PC-9 (cell line): ENCODE measurements at regions of chr2 and their contacts with region 1.

Region 1: DNA sequence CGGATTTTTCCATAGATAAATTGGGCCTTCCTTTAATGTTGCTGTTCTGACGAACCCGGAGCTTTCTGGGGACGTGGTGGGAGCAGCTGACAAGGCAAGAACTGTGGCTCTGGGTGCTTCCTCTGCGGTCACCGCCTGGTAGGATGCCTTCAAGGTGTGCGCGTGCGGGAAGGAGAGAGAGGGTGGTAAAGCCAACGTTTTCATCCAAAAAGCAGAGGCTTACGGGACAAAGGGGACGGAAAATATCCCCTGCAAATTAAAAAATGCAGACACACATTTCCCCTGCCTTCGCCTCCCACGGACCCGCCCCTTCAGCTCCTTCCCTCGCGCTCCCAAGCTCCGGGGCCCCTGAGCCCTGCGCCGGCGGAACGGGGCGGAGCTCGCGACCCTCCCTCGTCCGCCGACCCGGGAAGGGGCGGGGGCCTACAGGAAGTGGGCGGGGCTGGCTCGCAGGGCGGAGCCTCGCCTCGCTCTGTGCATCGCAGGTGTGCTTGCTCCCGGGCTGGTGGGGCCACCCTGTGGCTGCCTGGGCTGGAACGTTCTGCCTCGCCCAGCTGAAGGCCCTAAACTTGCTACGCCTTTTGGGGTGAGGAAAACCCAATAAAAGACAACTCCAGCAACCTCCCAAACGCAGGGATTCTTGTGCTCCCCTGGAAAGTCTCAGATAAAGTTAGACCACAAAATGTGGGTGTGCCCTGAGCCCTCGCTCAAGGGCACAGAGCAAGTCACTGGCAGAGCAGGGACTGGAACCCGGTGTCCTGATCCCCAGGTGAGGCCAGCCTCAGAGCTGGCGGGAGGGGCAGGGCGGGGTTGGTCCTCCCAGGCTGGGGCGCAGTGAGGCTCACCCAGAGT is 25.4 kb upstream of the SLC66A3 start:
- DNase-seq: peak; percentile 41 to 73
- H3K4me3 ChIP-seq: peak overlapping the region; percentile 49; the same call in 1 of the 2 replicates
- H3K27ac ChIP-seq: no peak overlapping the region
- H3K4me1 ChIP-seq: peaks cover 25% of the 10 kb centered on the region
- H3K27me3 ChIP-seq: no peaks in the 10 kb centered on the region
- CTCF ChIP-seq: peak; percentile 58

Region 2: GRCh38 chr2:10601866-10602566 is 527.8 kb before region 1 on chr2:
- CTCF ChIA-PET with region 1: no interaction called
- POLR2A ChIA-PET with region 1: no interaction called
- intact Hi-C with region 1: no loop called
- DNase-seq: no peak
- H3K4me3 ChIP-seq: no peak overlapping the region
- H3K27ac ChIP-seq: no peak overlapping the region
- H3K4me1 ChIP-seq: peaks cover 26% of the 10 kb centered on the region
- H3K27me3 ChIP-seq: no peaks in the 10 kb centered on the region
- CTCF ChIP-seq: no peak

Region 3: GRCh38 chr2:10832203-10832936 is 297.5 kb before region 1 on chr2:
- CTCF ChIA-PET with region 1: interaction called, 16 read pairs
- POLR2A ChIA-PET with region 1: no interaction called
- intact Hi-C with region 1: loop called (anchors 1 kb)
- DNase-seq: peak; percentile 69 to 82
- H3K4me3 ChIP-seq: no peak overlapping the region
- H3K27ac ChIP-seq: no peak overlapping the region
- H3K4me1 ChIP-seq: no peaks in the 10 kb centered on the region
- H3K27me3 ChIP-seq: peaks cover 32% of the 10 kb centered on the region
- CTCF ChIP-seq: peak; percentile 98

Region 4: GRCh38 chr2:11234309-11234708 is 104.5 kb after region 1 on chr2:
- CTCF ChIA-PET with region 1: no interaction called
- POLR2A ChIA-PET with region 1: no interaction called
- intact Hi-C with region 1: loop called (anchors 5 kb)
- DNase-seq: no peak
- H3K4me3 ChIP-seq: no peak overlapping the region
- H3K27ac ChIP-seq: no peak overlapping the region
- H3K4me1 ChIP-seq: no peaks in the 10 kb centered on the region
- H3K27me3 ChIP-seq: no peaks in the 10 kb centered on the region
- CTCF ChIP-seq: peak; percentile 82

Region 5: GRCh38 chr2:11446733-11447248 is 317.0 kb after region 1 on chr2:
- CTCF ChIA-PET with region 1: interaction called, 6 read pairs
- POLR2A ChIA-PET with region 1: no interaction called
- intact Hi-C with region 1: loop called (anchors 1 kb)
- DNase-seq: peak in 1 of 2 experiments; percentile 23
- H3K4me3 ChIP-seq: no peak overlapping the region
- H3K27ac ChIP-seq: no peak overlapping the region
- H3K4me1 ChIP-seq: no peaks in the 10 kb centered on the region
- H3K27me3 ChIP-seq: no peaks in the 10 kb centered on the region
- CTCF ChIP-seq: peak; percentile 92

Region 6: GRCh38 chr2:11583840-11584524 is 454.2 kb after region 1 on chr2:
- CTCF ChIA-PET with region 1: interaction called, 21 read pairs
- POLR2A ChIA-PET with region 1: no interaction called
- intact Hi-C with region 1: loop called (anchors 1 kb)
- DNase-seq: peak; percentile 66 to 72
- H3K4me3 ChIP-seq: no peak overlapping the region
- H3K27ac ChIP-seq: no peak overlapping the region
- H3K4me1 ChIP-seq: no peaks in the 10 kb centered on the region
- H3K27me3 ChIP-seq: peaks cover 51% of the 10 kb centered on the region
- CTCF ChIP-seq: peak; percentile 95

Region 7: GRCh38 chr2:11778923-11779757 is 649.3 kb after region 1 on chr2:
- CTCF ChIA-PET with region 1: no interaction called
- POLR2A ChIA-PET with region 1: no interaction called
- intact Hi-C with region 1: loop called (anchors 2 kb)
- DNase-seq: peak; percentile 54 to 68
- H3K4me3 ChIP-seq: no peak overlapping the region
- H3K27ac ChIP-seq: no peak overlapping the region
- H3K4me1 ChIP-seq: peaks cover 7% of the 10 kb centered on the region; the same call in 1 of the 2 replicates
- H3K27me3 ChIP-seq: no peaks in the 10 kb centered on the region
- CTCF ChIP-seq: peak; percentile 100